ENCODE measurements at regions of chr9 and their contacts with region 1.

Region 1: DNA sequence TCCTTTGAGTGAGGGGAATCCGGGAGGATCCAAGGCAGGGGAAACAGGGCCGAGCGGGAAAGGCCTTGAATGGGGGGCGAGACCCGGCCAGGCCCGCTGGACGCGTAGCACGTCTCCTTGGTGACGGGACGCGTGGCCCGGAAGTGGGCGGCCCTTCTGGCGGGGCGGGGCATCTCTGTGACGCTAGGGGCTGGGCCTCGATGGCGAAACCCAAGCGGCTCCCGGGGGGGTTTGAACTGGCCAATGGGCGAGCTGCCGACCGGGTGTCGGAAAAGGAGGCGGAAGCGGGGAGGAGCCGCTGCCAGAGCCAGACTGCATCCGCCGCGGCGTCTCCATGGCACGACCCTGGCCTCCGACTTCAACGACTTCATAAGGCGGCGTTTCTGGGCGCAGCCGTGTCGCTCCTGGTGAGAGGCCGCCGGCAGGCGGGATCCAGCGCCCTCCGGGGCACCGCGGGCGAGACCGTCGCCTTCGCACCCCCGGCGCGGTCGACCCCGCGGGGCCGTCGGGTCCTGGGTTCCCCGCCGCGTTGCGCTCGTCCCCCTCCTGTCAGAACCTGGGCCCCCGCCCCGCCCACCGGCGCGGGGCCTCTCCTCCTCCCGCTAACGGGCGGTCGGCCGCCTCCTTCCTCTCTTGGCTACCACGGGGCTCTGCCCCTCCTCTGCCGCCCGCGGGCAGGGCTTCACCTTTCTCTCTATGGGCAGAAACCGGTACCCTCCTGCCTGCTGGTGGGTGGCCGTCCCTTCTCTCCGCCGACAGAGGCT is at the start of gene ODF2:
- DNase-seq: peak; percentile 99
- ATAC-seq: peak; percentile 95
- H3K4me3 Mint-ChIP-seq: peak within 1 kb of the TSS; percentile 81
- H3K27ac Mint-ChIP-seq: peak within 1 kb of the TSS; percentile 82
- H3K4me1 Mint-ChIP-seq: peaks cover 16% of the 10 kb centered on the region
- H3K27me3 Mint-ChIP-seq: no peaks in the 10 kb centered on the region
- total RNA-seq, gene ODF2: 73.5 to 86.4 TPM

Region 2: GRCh38 chr9:127802576-127803443 is 653.2 kb before region 1 on chr9 and contains the start of gene FPGS:
- CTCF ChIA-PET with region 1: no interaction called
- POLR2A ChIA-PET with region 1: no interaction called
- intact Hi-C with region 1: loop called in 1 of 2 experiments (anchors 1 kb)
- DNase-seq: peak; percentile 93
- ATAC-seq: peak; percentile 86
- H3K4me3 Mint-ChIP-seq: peak within 1 kb of the TSS; percentile 98
- H3K27ac Mint-ChIP-seq: peak within 1 kb of the TSS; percentile 95
- H3K4me1 Mint-ChIP-seq: peaks cover 26% of the 10 kb centered on the region
- H3K27me3 Mint-ChIP-seq: no peaks in the 10 kb centered on the region
- total RNA-seq, gene FPGS: 71.9 to 80.4 TPM

Region 3: GRCh38 chr9:128275996-128276573 is 179.9 kb before region 1 on chr9 and contains the starts of genes GOLGA2 and SWI5:
- CTCF ChIA-PET with region 1: no interaction called
- POLR2A ChIA-PET with region 1: no interaction called
- intact Hi-C with region 1: loop called in 1 of 2 experiments (anchors 1 kb)
- DNase-seq: peak; percentile 100
- ATAC-seq: peak; percentile 99
- H3K4me3 Mint-ChIP-seq: peak within 1 kb of the TSS; percentile 97
- H3K27ac Mint-ChIP-seq: peak within 1 kb of the TSS; percentile 95
- H3K4me1 Mint-ChIP-seq: peaks cover 31% of the 10 kb centered on the region
- H3K27me3 Mint-ChIP-seq: no peaks in the 10 kb centered on the region
- total RNA-seq, gene GOLGA2: 28.4 to 29.4 TPM
- total RNA-seq, gene SWI5: 13.1 to 14.1 TPM

Region 4: DNA sequence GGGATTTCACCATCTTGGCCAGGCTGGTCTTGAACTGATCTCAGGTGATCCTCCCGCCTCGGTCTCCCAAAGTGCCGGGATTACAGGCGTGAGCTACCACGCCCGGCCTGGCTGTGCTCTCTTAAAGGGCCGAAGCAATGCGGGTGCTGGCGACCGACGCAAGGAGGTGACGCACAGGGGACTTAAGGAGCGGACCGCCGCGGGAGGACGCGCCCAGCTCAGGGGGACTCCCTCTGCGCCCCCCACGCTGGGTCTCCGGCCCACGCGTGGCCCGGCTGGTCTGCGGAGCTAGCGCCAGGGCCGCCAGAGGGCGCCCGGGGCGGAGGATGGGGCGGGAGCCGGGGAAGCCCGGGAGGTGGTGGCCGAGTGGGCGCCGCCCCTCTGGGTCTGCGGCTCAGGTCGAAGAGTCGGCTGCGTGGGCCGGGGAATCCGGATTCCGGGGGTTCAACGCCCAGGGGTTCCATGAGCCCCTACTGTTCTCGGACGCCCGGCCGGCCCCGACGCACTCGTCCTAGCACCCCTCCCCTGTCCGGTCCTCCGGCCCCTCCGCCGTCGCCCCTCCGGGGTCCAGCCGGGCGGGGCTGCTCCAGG is 35.9 kb before region 1 on chr9:
- CTCF ChIA-PET with region 1: no interaction called
- POLR2A ChIA-PET with region 1: no interaction called
- intact Hi-C with region 1: loop called in 1 of 2 experiments (anchors 1 kb)
- DNase-seq: peak; percentile 79
- ATAC-seq: peak; percentile 75
- H3K4me3 Mint-ChIP-seq: peak overlapping the region; percentile 59
- H3K27ac Mint-ChIP-seq: no peak overlapping the region
- H3K4me1 Mint-ChIP-seq: peaks cover 10% of the 10 kb centered on the region
- H3K27me3 Mint-ChIP-seq: peaks cover 25% of the 10 kb centered on the region

Region 5: GRCh38 chr9:128723866-128724743 is 268.1 kb after region 1 on chr9 and contains the start of gene ZDHHC12:
- CTCF ChIA-PET with region 1: no interaction called
- POLR2A ChIA-PET with region 1: interaction called, 3 read pairs
- intact Hi-C with region 1: loop called in 1 of 2 experiments (anchors 1 kb)
- DNase-seq: peak; percentile 100
- ATAC-seq: peak; percentile 98
- H3K4me3 Mint-ChIP-seq: peak within 1 kb of the TSS; percentile 95
- H3K27ac Mint-ChIP-seq: peak within 1 kb of the TSS; percentile 94
- H3K4me1 Mint-ChIP-seq: peaks cover 25% of the 10 kb centered on the region
- H3K27me3 Mint-ChIP-seq: no peaks in the 10 kb centered on the region
- total RNA-seq, gene ZDHHC12: 45.3 to 49.5 TPM

Region 6: DNA sequence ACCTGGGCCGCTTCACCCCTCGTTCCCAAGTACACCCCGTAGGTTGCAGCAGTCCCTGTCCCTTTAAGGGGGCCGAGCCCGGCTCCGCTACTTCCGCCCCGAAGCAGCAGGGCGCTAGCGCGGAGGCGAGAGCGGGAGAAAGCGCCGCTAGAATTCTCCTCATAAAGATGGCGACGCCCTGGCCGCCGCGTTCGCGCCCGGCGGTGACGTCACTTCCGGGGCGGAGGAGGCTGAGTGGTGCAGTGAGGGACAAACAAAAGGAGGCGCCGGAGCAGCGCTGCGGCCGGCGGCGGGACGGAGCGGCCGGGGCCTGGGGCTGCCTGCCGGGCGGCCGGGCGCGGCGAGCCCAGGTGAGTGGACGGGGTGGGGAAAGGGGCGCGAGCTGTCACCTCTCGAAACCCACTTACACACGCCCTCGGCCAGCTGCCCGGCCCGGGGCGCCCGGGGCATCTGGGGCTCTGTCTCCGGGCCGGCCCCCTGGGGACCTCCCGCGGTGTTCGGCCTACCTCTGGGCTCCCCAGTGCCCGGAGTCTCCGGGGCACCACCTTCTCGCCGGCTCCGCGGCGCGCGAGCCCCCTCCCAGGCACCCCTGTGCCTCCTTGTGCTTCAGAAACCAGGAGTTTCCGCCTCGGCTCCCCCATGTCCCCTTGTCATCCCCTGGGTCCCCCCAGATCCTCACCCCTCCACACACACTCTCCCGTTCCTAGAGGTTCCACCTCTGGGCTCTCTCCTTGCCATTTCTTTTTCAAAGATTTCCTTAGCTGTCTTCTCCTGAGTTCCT is 426.1 kb after region 1 on chr9 and contains the starts of genes KYAT1 and LRRC8A:
- CTCF ChIA-PET with region 1: no interaction called
- POLR2A ChIA-PET with region 1: no interaction called
- intact Hi-C with region 1: loop called in 1 of 2 experiments (anchors 1 kb)
- DNase-seq: peak; percentile 99
- ATAC-seq: peak; percentile 95
- H3K4me3 Mint-ChIP-seq: peak within 1 kb of the TSS; percentile 94
- H3K27ac Mint-ChIP-seq: peak within 1 kb of the TSS; percentile 91
- H3K4me1 Mint-ChIP-seq: peaks cover 56% of the 10 kb centered on the region
- H3K27me3 Mint-ChIP-seq: no peaks in the 10 kb centered on the region
- total RNA-seq, gene KYAT1: 14.8 to 18.5 TPM
- total RNA-seq, gene LRRC8A: 14.9 to 15.5 TPM

Region 7: GRCh38 chr9:129413537-129414376 is 957.7 kb after region 1 on chr9:
- CTCF ChIA-PET with region 1: no interaction called
- POLR2A ChIA-PET with region 1: no interaction called
- intact Hi-C with region 1: loop called in 1 of 2 experiments (anchors 5 kb)
- DNase-seq: peak; percentile 99
- ATAC-seq: peak; percentile 89
- H3K4me3 Mint-ChIP-seq: peak overlapping the region; percentile 75
- H3K27ac Mint-ChIP-seq: peak overlapping the region; percentile 94
- H3K4me1 Mint-ChIP-seq: peaks cover 23% of the 10 kb centered on the region
- H3K27me3 Mint-ChIP-seq: no peaks in the 10 kb centered on the region

Measured in activated CD4-positive, alpha-beta T cell treated with anti-CD3 and anti-CD28 coated beads for 36 hours (primary cell).